Psoas muscle (tissue), 8 donors: ENCODE measurements at regions of chr16 and their contacts with region 1.

Region 1: DNA sequence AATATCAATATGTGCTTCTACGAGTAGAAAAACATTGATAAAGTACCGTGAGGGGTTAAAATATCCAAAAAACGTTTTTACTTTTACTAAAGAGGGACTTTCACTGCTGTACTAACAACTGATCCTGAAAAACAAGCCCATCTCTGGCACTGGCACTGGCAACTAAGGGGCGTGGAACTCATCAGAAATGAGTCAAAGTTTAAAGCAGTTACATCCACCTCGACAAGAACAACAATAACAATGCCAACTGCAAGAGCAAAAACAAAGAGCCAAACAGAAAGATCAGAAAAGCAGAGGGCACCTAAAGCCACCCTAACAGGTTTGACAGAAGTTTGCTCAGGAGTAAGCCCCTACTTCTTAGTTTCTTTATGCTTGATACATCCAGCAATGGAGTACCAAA is 13.1 kb downstream of the MBTPS1 start:
- DNase-seq: no peak
- ATAC-seq: peak in 1 of 4 donors; percentile 62
- H3K4me3 ChIP-seq: no peak overlapping the region
- H3K27ac ChIP-seq: peak overlapping the region; percentile 19
- H3K4me1 ChIP-seq: peaks cover 23% of the 10 kb centered on the region
- H3K27me3 ChIP-seq: no peaks in the 10 kb centered on the region
- CTCF ChIP-seq: no peak

Region 2: DNA sequence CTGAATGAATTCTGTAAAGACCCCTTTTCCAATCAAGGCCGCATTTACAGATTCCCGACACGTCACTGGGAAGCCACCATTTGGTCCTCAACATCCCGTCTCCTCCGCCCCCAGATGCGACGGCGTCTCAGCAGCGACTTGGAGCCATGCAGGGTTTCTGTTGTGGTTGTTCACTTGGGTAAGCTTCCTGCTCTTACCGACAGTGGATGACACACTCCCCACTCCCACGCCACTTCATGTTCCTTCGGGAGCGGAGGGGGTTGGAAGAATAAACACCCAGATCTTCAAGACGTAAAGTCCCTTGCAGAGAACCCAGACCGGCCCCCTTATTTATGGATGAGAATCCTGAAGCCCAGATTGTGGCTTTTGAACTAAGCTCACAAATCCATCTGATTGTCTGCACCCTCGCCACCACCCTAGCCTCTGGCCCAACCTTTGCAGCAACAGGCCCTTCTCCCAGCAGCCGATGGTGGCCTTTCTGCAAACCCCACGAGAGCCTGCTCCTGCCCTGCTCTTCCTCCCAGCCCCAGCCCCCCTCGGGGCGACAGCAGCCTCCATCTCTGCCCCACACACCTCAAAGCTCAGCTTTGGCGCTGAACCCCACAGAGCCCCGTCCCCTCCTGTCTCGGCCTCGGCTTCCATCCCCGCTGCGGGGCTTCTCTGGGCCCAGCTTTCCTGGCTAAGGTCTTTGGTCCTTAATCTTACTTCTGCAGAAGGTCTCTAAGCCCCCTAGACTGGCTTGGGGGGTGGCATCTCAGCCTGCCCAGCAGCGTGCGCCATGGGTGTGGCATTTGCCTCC is 169.6 kb before region 1 on chr16:
- intact Hi-C with region 1: no loop called
- DNase-seq: no peak
- ATAC-seq: no peak
- H3K4me3 ChIP-seq: no peak overlapping the region
- H3K27ac ChIP-seq: no peak overlapping the region
- H3K4me1 ChIP-seq: no peaks in the 10 kb centered on the region
- H3K27me3 ChIP-seq: peaks cover 0 to 3% (median 0%) of the 10 kb centered on the region in 3 donors
- CTCF ChIP-seq: no peak

Region 3: DNA sequence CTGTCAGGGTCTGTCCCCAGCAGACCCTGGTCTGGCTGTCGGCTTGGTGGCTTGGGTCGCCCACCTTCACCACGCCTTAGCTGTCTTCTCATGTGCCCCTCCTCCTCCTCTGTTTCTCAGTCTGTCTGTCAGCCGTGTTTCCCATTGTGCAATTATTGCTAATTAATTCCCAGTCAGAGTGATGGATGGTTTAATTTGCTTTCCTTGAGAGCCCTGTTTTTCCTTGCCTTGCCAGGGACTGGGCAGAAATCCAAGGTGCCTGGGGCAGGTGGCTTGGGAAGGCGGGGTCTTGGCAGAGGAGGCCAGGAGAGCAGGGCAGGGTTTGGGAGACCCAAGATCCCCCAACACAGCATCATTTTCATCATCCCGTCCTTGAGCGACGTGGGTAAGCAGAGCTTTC is 114.4 kb before region 1 on chr16:
- intact Hi-C with region 1: no loop called
- DNase-seq: no peak
- ATAC-seq: no peak
- H3K4me3 ChIP-seq: no peak overlapping the region
- H3K27ac ChIP-seq: no peak overlapping the region
- H3K4me1 ChIP-seq: peaks cover 6% of the 10 kb centered on the region
- H3K27me3 ChIP-seq: peaks cover 0 to 6% (median 0%) of the 10 kb centered on the region in 3 donors
- CTCF ChIP-seq: no peak

Region 4: GRCh38 chr16:84144859-84145639 is 41.4 kb after region 1 on chr16 and contains the starts of genes DNAAF1 and HSDL1:
- intact Hi-C with region 1: loop called in 1 of 2 experiments (anchors 5 kb)
- DNase-seq: peak; percentile 92 to 95
- ATAC-seq: peak; percentile 94 to 98 (median 97)
- H3K4me3 ChIP-seq: peak within 1 kb of the TSS; percentile 95
- H3K27ac ChIP-seq: peak within 1 kb of the TSS; percentile 81
- H3K4me1 ChIP-seq: peaks cover 20% of the 10 kb centered on the region
- H3K27me3 ChIP-seq: no peaks in the 10 kb centered on the region
- CTCF ChIP-seq: no peak
- total RNA-seq, gene DNAAF1: not detected
- total RNA-seq, gene HSDL1: 12.4 to 24.4 (median 21.2) TPM

Region 5: DNA sequence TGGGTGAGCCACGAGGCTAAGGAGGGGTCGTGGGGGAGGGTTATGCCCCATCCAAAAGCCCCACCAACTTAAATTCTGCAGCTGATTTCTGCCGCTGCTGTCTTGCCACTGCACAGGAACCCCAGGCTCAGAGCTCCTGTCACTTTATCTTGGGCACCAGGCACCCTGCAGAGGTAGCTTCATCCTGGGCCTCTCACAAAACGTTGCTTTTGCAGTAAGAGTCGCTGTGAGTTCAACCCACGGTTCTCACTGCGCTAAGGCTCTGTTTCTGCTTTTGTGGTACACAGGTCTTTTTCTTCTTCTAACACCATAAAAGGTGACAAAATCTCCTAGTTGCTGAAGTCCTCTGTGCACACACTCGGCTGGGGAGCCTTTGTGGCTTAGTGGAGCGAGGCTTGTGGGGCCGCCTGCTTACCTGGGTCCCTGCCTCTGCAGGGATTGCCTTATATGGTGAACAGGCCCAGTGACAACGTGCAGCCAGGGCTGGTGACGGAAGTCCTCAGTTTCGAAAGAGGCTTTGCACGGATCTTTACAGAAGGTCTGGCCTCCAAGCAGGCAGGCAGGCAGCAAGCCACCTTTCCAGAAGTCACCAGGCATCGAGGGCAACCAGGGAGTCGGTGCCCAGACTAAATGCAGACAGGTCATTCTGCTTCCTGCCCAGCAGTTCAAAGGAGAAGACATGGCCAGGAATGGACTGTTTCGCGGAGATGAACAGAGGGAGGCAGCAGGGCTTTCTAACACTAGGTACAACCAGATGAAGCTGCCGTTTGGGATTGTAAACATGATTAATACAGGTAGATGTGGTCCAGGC is 411.2 kb after region 1 on chr16:
- intact Hi-C with region 1: no loop called
- DNase-seq: peak in 1 of 2 donors; percentile 58
- ATAC-seq: no peak
- H3K4me3 ChIP-seq: no peak overlapping the region
- H3K27ac ChIP-seq: no peak overlapping the region
- H3K4me1 ChIP-seq: no peaks in the 10 kb centered on the region
- H3K27me3 ChIP-seq: no peaks in the 10 kb centered on the region
- CTCF ChIP-seq: no peak